Activated B cell treated with CpG ODN at 0.5 μM for 24 hours (primary cell): ENCODE measurements at regions of chr15 and their contacts with region 1.

Region 1: DNA sequence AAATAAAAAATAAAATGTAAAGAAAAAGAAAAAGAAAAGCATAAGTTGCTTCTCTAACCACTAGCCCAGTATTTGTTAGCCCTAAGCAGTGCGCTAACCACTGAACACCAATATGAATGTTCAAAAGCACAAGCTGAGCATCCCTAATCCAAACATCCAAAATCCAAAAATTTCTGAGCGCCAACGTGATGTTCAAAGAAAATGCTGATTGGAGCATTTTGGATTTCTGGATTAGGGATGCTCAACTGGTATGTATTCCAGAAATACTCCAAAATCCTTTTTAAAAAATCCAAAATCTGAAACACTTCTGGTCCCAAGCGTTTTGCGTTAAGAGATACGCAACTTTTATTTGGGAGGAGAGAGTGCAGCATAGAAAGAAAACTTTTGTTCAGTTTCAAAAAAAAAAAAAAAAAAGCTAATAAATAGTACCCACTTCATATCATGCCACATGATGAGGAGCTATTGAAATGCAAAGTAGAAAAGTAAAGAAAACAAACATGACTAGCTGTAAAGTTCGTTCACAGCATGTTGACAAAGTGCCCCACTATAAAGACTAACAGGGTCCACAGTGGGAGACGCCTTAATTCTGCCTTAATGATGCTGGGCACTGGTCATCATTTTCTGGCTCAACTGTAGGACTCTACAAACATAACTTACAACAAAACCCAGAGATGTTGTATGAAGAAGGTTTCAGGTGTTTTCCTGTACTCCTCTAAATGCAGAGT is 32.4 kb downstream of the EDC3 start:
- DNase-seq: no peak
- ATAC-seq: no peak
- H3K4me3 Mint-ChIP-seq: no peak overlapping the region
- H3K27ac Mint-ChIP-seq: no peak overlapping the region
- H3K4me1 Mint-ChIP-seq: peaks cover 3% of the 10 kb centered on the region
- H3K27me3 Mint-ChIP-seq: no peaks in the 10 kb centered on the region
- CTCF ChIP-seq: no peak

Region 2: DNA sequence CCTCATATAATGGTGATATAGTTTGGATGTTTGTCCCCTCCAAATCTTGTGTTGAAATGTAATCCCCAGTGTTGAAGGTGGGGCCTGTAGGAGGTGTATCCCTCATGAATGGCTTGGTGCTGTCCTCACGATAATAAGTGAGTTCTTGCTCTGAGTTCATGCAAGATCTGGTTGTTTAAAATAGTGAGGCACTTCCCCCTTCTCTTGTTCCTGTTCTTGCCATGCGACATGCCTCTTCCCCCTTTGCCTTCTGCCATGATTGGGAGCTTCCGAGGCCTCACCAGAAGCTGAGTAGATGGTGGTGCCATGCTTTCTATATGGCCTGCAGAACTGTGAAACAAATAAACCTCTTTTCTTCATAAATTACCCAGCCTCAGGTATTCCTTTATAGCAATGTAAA is 1181.3 kb before region 1 on chr15:
- CTCF ChIA-PET with region 1: no interaction called
- POLR2A ChIA-PET with region 1: no interaction called
- intact Hi-C with region 1: no loop called
- DNase-seq: no peak
- ATAC-seq: no peak
- H3K4me3 Mint-ChIP-seq: no peak overlapping the region
- H3K27ac Mint-ChIP-seq: no peak overlapping the region
- H3K4me1 Mint-ChIP-seq: peaks cover 4% of the 10 kb centered on the region
- H3K27me3 Mint-ChIP-seq: peaks cover 3% of the 10 kb centered on the region
- CTCF ChIP-seq: no peak

Region 3: DNA sequence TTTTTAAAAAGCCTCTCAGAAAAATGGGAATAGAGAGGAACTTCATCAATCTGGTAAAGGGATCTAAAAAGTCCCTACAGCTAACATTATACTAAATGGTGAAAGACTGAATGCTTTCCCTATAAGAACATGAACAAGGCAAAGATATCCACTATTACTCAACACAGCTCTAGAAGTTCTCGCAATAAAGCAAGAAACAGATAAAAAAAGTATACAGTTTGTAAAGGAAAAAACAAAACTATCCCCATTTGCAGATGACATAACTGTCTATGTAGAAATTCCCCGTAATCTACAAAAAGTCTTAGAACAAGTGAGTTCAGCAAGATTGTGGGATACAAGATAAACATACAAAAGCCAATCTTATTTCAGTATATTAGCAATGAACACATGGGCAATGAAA is 17.0 kb after region 1 on chr15:
- CTCF ChIA-PET with region 1: no interaction called
- POLR2A ChIA-PET with region 1: interaction called, 12 read pairs
- intact Hi-C with region 1: no loop called
- DNase-seq: no peak
- ATAC-seq: no peak
- H3K4me3 Mint-ChIP-seq: no peak overlapping the region
- H3K27ac Mint-ChIP-seq: no peak overlapping the region
- H3K4me1 Mint-ChIP-seq: peaks cover 7% of the 10 kb centered on the region
- H3K27me3 Mint-ChIP-seq: no peaks in the 10 kb centered on the region
- CTCF ChIP-seq: no peak

Region 4: DNA sequence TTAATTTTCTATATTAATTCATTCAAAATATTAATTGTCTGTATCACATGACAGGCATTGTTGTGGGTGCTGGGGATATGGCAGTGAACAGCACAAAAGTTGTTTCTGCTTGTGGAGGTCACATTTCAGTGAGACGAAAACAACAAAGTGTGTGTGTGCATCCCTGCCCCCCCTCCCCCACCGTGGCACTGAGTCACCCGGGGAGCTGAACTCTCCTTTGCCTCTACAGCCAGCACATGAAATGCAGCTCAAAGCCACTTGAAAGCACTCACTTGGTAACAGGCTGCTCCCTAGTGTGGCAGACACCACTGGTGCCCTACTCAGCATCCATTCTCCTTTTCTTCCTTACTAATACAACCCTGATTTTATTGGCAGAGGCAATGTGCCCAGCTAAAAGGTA is 315.0 kb after region 1 on chr15:
- CTCF ChIA-PET with region 1: no interaction called
- POLR2A ChIA-PET with region 1: no interaction called
- intact Hi-C with region 1: no loop called
- DNase-seq: no peak
- ATAC-seq: no peak
- H3K4me3 Mint-ChIP-seq: no peak overlapping the region
- H3K27ac Mint-ChIP-seq: no peak overlapping the region
- H3K4me1 Mint-ChIP-seq: no peaks in the 10 kb centered on the region
- H3K27me3 Mint-ChIP-seq: peaks cover 24% of the 10 kb centered on the region
- CTCF ChIP-seq: no peak